ENCODE measurements at regions of chr3 and their contacts with region 1.

Region 1: GRCh38 chr3:183468424-183468823 is 40.0 kb upstream of the MCF2L2 start:
- DNase-seq: no peak
- ATAC-seq: no peak

Region 2: DNA sequence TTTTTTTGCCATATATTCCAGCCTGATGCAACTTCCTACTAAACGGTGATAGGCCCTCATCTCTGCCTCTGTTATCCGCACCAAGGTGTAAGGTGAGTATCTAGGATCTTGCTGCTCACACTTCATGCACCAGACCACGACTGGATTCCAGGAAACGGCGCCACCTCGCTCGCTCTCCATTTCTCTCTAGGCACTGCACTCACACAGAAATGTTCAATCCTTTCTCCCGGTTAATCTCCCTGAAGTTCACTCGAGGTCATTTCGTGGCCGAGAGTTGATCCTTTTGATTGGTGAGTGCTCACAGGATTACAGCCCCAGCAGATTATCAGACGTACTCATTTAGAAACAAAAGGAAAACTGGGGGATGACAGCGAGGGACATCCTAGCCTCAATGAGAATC is 68.1 kb before region 1 on chr3:
- intact Hi-C with region 1: no loop called
- DNase-seq: no peak
- ATAC-seq: no peak

Region 3: GRCh38 chr3:183555541-183556081 is 87.2 kb after region 1 on chr3 and contains the start of gene KLHL6:
- intact Hi-C with region 1: loop called (anchors 5 kb)
- DNase-seq: peak; percentile 75
- ATAC-seq: peak; percentile 65
- total RNA-seq, gene KLHL6: 0.97 TPM

Region 4: DNA sequence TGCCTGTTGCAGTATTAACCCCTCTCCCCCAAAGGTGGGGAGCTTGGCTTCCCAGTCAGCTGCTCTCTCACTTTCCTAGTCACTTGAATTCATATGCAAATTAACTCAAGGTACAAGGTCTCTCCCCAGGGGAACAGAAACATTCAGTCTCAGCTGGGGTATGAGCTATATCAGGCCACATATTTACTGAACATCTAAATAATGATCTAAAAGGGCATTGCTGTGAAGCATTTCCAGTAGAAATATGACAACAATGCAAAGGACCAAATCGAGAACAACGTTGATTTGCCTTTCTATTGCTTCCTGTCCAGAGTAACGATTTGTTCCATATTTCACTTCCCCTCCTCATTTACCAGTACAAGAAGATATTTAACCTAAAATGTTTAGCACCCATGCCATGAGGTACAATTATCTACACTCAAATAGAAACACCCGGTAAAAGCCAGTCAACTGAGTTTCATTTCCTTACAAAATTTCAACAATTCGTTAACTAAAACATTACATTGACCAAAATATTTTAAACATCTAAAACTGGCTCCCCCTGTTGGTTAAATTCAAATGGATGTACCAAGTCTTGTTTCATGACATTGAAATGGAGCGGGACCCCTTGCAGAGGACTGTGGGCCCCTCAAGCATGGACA is 123.6 kb after region 1 on chr3:
- intact Hi-C with region 1: no loop called
- DNase-seq: no peak
- ATAC-seq: no peak

Region 5: DNA sequence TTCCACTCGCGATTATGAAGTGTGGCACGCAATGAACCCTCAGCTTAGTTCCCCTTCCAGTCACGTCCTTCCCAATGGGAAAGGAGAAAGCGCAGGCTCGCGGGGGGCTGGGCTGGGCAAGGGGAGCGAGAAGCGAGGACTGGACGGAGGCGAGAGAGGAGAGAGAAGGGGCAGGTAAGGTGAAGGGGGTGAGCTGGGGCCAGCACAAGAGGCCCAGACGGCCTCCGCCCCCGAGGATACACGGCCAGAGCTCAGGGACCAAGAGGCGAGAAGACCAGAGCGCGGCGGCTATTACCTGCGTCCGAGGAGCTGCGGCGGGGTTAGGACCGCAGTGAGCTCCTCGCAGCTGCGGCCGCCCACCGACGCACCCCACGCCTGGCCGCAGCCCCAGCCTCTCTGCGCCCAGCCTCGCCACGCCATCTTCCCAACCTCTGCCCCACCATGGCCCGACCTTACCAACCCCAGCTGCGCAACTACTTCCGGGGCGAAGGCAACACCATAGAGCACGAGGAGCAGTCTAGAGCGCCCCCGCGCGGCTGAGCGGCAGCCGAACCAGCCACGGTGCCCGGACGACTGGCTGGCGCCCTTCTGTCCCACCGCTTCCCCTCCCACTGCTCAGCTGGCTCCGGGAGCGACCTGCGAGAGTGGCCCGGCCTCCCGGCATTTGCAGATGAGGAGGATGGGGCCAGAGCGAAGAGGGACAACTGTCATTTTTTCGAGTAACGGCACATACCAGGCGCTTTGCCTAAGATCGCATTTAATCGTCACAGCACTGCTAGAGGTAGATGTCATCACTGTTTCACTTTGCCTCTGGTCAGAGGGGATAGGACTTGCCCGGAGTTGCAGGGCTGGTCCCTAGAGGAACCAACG is 416.2 kb after region 1 on chr3 and contains the start of gene PARL:
- intact Hi-C with region 1: loop called (anchors 2 kb)
- DNase-seq: peak; percentile 99
- ATAC-seq: peak; percentile 100
- total RNA-seq, gene PARL: 56.5 TPM